ENCODE measurements at regions of chr17 and their contacts with region 1.

Region 1: DNA sequence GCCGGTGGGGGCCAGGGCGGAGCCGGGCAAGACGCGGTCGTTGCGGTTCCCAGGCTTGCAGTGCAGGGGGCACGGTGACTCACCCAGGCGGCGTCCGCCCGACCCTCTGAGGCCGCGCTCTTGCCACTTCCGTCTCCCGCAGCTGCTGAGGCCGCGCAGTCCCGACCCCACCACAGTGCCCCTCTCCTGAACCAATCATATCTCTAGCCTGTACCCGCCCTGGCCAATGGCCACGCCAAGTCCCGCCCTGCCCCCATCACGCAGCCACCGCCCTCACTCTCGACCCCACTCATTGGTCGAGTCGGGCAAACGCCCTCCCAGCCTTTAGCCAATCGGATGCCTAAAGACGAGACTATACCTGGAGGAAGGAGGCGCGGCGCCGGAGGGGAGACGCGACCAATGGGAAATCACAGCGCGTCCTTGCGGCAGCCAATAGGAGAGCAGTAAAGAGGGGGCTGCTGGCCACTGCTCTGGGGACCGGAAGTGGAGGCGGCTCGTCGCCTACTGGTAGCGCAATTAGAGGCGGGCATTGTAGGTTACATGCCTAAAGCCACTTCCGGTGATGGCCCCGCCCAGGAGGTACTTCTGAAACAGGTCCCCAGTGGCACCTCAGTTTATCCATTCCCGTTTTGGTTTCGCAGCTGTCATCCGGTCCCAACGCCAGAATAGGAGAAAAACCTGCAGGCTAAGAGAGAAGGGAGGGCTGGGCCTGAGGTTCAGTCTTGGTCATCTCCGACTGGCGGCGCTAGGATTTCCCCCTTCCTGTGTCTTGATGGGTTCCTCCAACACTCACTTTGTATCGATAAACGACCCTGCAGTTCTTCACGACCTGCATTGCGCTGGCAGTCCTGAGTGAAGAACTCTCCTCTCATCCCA is 3.5 kb upstream of the MTMR4 start:
- DNase-seq: peak; percentile 99 to 100 (median 100)

Region 2: DNA sequence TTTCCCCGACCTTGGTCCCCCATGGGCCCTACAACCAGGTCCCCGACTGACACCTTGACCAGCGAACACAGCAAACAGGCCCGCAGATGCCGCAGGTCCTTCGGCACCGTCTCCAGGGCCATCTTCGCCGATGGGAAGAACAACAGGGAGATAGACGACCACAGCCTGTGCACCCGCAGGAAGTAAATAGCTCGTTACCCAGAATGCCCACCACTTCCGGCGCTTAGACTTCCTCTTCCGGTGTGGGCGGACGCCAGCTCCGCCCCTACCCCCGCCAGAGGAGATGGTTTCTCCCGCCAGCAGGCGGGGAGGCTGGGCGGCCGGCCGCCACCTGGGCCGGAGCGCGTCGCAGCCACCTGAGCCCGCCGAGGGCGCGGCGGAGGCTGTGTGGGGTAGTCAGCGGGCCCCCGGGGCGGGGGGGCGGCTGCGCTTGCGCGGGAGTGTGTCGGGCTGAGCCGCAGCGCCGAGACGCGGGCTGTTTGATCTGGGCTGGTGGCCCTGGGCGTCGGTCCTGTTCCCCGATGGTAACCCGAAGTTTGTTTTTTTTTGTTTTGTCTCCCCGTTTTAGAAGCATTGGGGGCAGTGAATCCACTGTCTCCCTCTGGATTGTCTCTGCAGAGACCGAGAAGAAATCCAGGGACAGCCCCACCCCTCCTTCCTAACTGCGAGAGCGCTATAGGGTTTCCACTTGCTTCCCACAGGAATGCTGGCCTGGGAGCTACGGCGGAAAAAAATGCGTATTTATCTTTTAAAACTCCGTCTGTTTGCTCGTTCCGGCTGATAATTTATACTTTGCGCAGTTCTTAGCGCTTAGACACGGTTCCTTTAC is 165.7 kb before region 1 on chr17 and contains the start of gene SUPT4H1:
- intact Hi-C with region 1: loop called (anchors 10 kb)
- DNase-seq: peak; percentile 78 to 97 (median 82)

Region 3: GRCh38 chr17:58631523-58632323 is 113.8 kb after region 1 on chr17:
- intact Hi-C with region 1: loop called (anchors 1 kb)
- DNase-seq: peak; percentile 90 to 99 (median 98)

Region 4: GRCh38 chr17:58692239-58693055 is 174.5 kb after region 1 on chr17 and contains the start of gene RAD51C:
- intact Hi-C with region 1: loop called (anchors 5 kb)
- DNase-seq: peak; percentile 71 to 98 (median 86)

Region 5: DNA sequence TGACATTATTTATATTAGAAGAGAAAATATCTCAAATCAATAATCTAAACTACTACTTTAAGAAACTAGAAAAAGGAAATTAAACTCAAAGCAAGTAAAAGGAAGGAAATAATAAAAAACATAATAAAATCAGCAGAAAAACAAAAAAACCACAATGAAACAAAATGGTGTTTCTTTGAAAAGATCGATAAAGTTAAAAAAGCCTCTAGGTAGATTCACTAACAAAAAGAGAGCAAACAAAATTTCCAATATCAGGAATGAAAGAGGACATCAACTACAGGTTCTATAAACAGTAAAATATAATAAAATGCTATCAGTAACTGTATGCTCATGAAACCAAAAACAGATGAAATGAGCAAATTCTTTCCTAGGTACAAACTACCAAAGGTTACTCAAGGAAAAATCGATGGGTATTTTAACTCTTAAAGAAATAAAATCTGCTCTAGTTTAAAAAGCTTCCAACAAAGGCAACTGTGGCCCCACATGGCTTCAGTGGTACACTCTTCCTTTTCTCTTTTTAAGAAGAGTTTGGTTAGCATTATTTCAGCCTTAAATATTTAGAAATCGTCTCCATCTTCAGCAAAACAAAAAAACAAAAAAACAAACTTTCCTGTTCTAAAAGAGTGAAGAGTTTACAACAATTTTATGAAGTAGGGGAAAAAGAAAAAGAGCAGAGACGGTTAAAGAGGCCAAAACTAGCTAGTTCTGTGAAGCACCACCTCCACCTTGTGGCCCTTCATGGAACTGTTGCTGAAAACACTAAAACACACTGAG is 486.6 kb after region 1 on chr17:
- intact Hi-C with region 1: loop called (anchors 2 kb)
- DNase-seq: peak in 5 of 10 donors; percentile 27 to 69 (median 58)

Region 6: DNA sequence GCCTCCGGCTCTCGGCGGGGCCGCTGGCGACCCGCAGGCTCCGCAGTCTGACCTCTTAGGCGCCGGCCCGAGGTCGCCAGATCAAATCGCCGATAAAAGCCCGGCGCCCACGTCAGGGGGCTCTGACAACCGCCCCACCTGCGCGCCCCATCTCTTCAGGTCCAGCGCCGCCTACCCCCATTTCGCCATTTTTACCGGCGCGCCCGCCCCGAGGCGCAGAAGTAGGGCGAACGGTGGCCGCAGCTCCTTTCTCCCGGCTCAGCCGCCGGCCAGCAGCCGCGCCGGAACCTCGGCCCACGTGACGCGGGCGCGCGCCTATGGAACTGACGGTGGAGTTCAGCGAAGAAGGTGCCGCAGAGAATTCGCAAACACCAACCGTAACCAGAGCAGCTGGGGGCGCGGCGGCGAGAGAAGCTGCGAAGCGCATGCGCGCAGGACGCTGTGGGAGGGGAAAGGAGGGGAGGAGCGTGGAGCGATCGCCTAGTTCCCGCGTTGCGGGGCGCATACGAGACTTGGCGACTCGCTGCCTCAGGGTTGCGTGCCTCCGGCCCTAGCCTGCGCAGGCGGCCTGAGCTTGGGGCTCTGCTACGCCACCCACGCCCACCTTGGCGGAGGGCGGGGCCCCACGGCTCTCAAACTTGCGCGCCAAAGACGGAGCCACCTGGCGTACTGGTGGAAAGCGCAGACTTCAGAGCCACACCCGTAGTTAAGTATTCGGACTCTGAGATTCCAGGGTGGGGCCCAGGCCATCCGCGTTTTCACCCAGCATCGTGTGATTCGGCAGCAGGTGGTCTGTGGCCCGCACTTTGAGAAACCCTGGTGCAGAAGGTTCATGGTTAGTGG is 588.7 kb after region 1 on chr17 and contains the start of gene TRIM37:
- intact Hi-C with region 1: loop called (anchors 5 kb)
- DNase-seq: peak; percentile 94 to 99 (median 96)